AG04450 (cell line): ENCODE measurements at regions of chr20 and their contacts with region 1.

Region 1: DNA sequence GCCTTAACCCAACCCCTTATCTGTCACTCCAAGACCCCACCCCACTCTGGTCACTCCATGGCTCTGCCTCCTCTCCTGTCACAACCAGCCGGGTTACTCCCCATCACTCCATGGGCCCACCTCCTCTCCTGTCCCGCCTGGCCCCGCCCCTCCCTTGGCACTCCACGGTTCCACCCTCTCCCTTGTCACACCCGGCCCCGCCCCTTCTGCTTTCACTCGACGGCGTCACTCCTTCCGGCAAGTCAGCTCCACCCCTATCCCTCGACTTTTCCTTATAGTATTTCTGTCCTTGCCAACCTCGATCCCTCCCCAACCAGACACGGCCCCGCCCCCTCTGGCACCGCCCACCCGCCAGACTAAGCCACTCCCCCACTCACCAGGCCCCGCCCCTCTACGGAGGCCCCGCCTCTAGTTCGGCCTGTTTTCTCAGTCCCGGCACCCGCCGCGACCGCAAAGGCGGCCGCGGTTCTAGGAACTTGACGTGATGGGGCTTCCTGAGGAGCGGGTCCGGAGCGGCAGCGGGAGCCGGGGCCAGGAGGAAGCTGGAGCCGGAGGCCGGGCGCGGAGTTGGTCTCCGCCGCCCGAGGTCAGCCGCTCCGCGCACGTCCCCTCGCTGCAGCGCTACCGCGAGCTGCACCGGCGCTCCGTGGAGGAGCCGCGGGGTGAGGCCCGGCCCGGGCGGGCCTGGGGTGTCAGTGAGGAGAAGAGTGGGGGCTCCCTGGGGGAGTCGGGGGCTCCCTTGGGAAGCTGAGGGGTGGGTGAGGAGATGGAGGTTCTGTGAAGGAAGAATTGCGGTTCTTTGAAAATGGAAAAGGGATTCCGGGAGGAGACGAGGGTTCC is at the start of gene ACSS2:
- DNase-seq: peak; percentile 95
- H3K4me3 ChIP-seq: peak within 1 kb of the TSS; percentile 77
- H3K27ac ChIP-seq: no peak within 1 kb of the TSS
- H3K27me3 ChIP-seq: no peaks in the 10 kb centered on the region
- CTCF ChIP-seq: no peak
- polyA plus RNA-seq, gene ACSS2: 37.3 and 43.6 TPM in 2 replicates

Region 2: GRCh38 chr20:34892671-34893070 is 16.3 kb after region 1 on chr20:
- CTCF ChIA-PET with region 1: interaction called, 8 read pairs
- POLR2A ChIA-PET with region 1: interaction called, 13 read pairs
- DNase-seq: no peak
- H3K4me3 ChIP-seq: no peak overlapping the region
- H3K27ac ChIP-seq: no peak overlapping the region
- H3K27me3 ChIP-seq: no peaks in the 10 kb centered on the region
- CTCF ChIP-seq: no peak

Region 3: DNA sequence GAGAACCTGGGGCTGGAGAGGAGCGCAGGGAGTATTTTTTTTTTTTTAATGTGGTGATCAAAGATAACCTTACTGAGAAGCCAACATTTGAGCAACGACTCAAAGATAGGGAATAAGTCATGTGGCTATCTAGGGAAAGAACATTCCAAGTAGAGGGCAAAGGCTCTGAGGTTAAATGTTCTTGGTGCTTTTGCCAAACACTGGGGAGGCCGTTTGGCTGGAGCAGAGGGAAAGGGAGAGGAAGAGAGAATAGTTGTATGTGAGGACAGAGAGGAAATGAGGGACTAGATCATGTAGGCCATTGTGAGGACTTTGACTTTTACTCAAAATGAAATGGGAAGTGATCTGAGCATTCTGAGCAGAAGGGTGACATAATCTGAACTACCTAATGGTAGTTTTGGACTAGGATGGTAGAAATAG is 27.8 kb after region 1 on chr20:
- CTCF ChIA-PET with region 1: interaction called, 4 read pairs
- POLR2A ChIA-PET with region 1: interaction called, 11 read pairs
- DNase-seq: no peak
- H3K4me3 ChIP-seq: no peak overlapping the region
- H3K27ac ChIP-seq: no peak overlapping the region
- H3K27me3 ChIP-seq: no peaks in the 10 kb centered on the region
- CTCF ChIP-seq: no peak

Region 4: DNA sequence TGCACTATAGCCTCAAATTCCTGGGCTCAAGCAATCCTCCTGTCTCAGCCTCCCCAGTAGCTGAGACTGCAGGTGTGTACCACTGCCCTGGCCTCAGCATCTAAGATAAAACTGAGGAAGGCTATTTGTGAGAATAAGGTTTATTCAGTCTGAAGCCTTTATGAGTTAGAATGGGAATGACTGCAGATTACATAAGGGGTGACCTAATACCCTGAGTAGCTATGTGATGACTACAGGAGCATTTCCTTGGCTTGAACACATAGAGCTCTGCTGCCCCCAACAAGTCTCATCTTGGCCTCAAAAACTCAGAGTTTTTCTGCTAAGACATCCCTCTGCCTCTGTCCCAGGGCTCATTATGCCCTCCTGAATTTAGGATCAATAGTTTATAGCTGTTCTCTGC is 71.6 kb after region 1 on chr20:
- CTCF ChIA-PET with region 1: interaction called, 15 read pairs
- POLR2A ChIA-PET with region 1: interaction called, 5 read pairs
- DNase-seq: peak; percentile 57
- H3K4me3 ChIP-seq: no peak overlapping the region
- H3K27ac ChIP-seq: no peak overlapping the region
- H3K27me3 ChIP-seq: no peaks in the 10 kb centered on the region
- CTCF ChIP-seq: no peak

Region 5: GRCh38 chr20:34955232-34956040 is 79.1 kb after region 1 on chr20 and contains the starts of genes GSS and MYH7B:
- CTCF ChIA-PET with region 1: interaction called, 57 read pairs
- POLR2A ChIA-PET with region 1: interaction called, 17 read pairs
- DNase-seq: peak; percentile 91
- H3K4me3 ChIP-seq: peak within 1 kb of the TSS; percentile 80
- H3K27ac ChIP-seq: peak within 1 kb of the TSS; percentile 92
- H3K27me3 ChIP-seq: no peaks in the 10 kb centered on the region
- CTCF ChIP-seq: peak; percentile 55
- polyA plus RNA-seq, gene GSS: 71.6 and 77.4 TPM in 2 replicates
- polyA plus RNA-seq, gene MYH7B: 0.02 and 0.20 TPM in 2 replicates

Region 6: GRCh38 chr20:35001596-35002362 is 125.4 kb after region 1 on chr20:
- CTCF ChIA-PET with region 1: interaction called, 17 read pairs
- POLR2A ChIA-PET with region 1: no interaction called
- DNase-seq: no peak
- H3K4me3 ChIP-seq: no peak overlapping the region
- H3K27ac ChIP-seq: no peak overlapping the region
- H3K27me3 ChIP-seq: no peaks in the 10 kb centered on the region
- CTCF ChIP-seq: peak; percentile 41; the same call in 1 of the 2 replicates